Right ventricle myocardium superior (tissue), 1 donor: ENCODE measurements at regions of chr13 and their contacts with region 1.

Region 1: GRCh38 chr13:110412132-110412914 is 105.2 kb downstream of the COL4A2 start:
- DNase-seq: peak; percentile 89
- ATAC-seq: peak; percentile 77

Region 2: GRCh38 chr13:110220471-110220870 is 191.9 kb before region 1 on chr13:
- intact Hi-C with region 1: loop called (anchors 5 kb)
- DNase-seq: no peak
- ATAC-seq: no peak

Region 3: DNA sequence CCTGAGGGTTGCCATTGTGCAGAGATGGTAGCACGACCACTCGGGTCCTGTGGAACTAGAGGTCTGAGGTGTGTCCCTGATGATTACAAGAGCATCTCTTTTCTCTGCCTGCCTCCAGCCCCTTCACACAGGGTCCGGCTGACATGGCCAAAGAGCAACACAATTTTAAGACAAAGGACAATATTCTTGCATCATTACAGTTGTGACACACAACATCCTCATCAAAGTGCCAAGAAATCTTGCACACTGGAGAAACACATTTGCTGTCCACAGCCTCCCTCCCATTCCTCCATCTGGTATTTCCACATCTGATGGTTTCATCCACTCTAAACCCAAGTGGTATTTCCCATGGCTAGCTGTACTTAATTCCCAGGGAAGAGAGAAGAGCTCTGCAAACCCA is 118.2 kb before region 1 on chr13:
- intact Hi-C with region 1: no loop called
- DNase-seq: no peak
- ATAC-seq: peak; percentile 71

Region 4: DNA sequence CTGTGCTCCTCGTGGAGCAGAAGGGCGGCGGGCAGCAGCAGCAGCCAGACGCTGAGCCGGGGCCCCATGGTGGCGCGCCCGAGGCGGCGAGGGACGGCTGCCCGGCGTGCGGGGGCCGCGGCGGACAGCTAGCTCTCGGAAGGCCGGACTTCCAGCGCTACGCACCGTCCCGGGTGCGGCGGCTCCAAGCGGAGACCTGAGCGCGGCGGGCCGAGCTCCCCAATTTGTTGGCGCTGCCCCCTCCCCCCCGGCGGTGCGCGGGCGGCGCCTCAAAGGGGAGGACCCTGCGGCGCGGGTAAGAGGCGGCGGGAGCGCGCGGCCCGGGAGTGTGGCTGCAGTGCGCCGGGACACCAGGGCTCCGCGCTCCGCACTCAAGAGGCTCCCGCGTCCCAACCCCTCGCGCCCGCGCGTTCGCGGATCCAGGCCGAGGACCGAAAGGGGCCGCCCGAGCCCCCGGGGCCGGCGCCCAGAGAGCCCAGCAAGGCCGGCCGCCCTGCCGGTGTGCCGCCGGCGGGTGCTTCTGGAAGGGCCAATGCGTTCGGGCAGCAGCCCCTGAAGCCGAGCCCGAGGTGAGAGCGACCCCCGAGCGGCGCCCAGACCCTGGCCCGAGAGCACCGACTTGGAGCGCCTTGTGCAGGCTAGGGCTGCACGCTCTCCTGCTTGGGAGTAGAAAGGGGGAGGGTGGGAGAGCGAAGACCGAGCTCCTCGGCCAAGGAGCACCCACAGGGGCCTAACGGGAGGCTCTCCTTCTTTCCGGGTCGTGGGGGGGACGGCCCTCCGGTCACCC is 105.2 kb before region 1 on chr13 and contains the starts of genes COL4A1 and COL4A2:
- intact Hi-C with region 1: loop called (anchors 5 kb)
- DNase-seq: peak; percentile 89
- ATAC-seq: peak; percentile 84
- total RNA-seq, gene COL4A1: 107 TPM
- total RNA-seq, gene COL4A2: 91.2 TPM

Region 5: DNA sequence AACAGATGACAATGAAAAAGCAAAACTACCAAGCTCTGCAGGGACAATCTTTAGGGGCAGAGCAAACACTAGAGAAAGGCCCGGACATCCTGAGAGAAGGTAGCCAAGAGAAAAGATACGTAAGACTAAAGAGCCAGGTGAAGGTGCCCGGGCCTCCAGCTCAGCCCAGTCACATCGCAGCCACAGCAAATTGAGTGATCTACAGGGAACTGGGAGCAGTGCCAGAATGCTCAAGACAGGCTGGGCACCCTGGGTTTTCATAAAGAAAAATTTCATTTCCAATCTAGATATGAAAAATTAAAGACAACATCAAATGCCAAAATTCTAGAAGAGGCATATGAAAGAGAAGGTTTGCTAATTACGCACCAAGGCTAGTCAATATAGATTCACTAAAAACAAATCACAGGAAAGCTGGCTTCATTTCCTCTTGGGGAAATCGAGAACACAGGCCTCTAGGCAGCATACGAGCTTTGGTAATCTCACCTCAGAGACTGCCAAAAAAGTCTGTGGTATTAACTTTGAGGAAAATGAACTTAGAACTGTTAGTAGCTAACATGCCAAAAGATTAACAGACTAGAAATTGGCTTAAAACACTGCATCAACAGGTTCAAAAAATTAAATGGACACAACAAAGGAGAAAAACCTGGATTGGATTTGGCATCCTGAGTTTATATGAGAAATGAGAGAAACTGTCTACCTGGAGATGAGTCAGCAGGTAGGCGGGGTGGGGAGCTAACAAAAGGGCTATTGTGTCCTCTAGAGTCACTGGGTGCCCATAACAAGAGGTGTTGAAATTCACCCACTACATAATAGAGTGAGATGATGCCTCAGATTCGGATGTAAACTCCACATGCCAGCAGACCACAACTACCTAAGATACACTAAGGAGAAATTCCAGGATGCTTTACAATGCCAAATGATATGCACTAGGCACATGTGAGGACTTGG is 495.9 kb after region 1 on chr13:
- intact Hi-C with region 1: no loop called
- DNase-seq: no peak
- ATAC-seq: peak; percentile 63